ENCODE measurements at regions of chr5 and their contacts with region 1.

Region 1: DNA sequence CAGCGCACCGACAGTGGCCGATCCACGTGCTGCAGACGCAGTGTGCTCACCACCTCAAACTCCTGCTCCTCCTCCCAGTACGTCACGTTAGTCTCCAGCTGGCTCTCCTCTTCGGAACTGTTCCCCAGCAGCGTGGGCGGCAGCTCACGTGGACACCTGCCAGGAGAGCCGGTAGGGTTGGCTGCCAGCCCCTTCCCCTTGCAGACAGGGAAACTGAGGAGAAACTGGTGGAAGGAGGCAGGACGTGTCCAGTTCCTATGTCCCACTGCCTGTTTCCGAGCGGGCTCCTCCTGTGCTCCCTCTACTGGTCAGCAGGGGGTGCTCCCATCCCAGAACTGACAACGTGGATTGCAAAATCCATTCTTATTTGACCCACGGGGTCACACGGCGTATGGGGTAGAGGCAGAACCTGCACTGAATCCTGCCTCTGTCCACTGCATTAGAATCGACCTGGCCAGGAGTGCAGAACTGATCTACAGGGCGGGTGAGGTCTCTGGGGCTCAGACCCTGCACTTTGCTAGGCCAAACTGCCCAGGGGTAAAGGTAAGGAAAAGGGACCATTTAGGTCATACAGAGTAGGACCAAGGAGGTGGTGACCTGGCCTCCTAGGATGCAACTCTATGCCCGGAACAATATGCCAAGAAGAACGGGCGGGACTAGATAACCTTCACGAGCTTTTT is 25.7 kb downstream of the PDGFRB start:
- DNase-seq: peak; percentile 90
- H3K4me3 Mint-ChIP-seq: peak overlapping the region; percentile 59
- H3K27ac Mint-ChIP-seq: no peak overlapping the region
- H3K4me1 Mint-ChIP-seq: peaks cover 25% of the 10 kb centered on the region
- H3K27me3 Mint-ChIP-seq: no peaks in the 10 kb centered on the region
- CTCF ChIP-seq: peak; percentile 98

Region 2: DNA sequence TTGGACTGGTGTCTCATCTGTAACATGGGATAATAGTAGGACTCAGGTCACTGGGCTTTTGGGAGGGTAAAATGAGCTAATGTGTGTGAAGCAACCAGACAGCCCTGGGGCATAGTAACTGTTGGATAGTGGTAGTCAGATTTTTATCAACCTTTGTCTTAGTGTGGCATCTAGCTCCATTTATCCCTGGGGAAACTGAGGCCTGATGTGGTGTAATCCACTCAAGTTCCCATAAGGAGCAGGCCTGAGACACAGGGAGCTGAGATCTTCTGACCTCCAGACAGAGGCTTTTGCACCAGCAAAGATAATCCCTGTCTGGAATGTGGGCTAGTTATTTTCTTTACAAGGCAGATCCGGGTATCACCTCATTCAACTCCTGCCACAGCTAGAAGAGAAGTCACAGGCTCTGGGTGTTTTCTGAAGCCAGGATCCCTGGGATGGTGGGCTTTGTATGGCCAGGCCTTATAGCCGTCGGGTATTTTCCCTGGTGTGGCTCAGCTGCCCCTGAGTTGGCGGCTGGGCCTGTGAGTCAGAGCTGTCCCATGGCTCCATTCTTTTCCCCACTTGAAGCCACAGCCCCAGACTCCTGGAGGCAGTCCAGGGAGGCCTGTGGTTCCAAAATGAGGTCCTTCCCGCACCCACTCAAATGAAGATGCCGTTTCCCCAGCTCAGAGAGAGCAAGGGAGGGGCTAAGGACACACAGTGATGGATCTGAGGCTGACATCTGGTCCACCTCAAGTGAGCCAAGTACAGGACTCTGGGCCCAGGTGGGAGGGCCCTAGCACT is 17.5 kb before region 1 on chr5:
- CTCF ChIA-PET with region 1: interaction called, 32 read pairs
- POLR2A ChIA-PET with region 1: interaction called, 3 read pairs
- intact Hi-C with region 1: no loop called
- DNase-seq: peak; percentile 93
- H3K4me3 Mint-ChIP-seq: no peak overlapping the region
- H3K27ac Mint-ChIP-seq: peak overlapping the region; percentile 46
- H3K4me1 Mint-ChIP-seq: peaks cover 47% of the 10 kb centered on the region
- H3K27me3 Mint-ChIP-seq: no peaks in the 10 kb centered on the region
- CTCF ChIP-seq: no peak

Region 3: GRCh38 chr5:150143350-150144245 is 13.6 kb after region 1 on chr5:
- CTCF ChIA-PET with region 1: interaction called, 29 read pairs
- POLR2A ChIA-PET with region 1: interaction called, 4 read pairs
- intact Hi-C with region 1: no loop called
- DNase-seq: peak; percentile 96
- H3K4me3 Mint-ChIP-seq: peak overlapping the region; percentile 35
- H3K27ac Mint-ChIP-seq: peak overlapping the region; percentile 89
- H3K4me1 Mint-ChIP-seq: peaks cover 42% of the 10 kb centered on the region
- H3K27me3 Mint-ChIP-seq: no peaks in the 10 kb centered on the region
- CTCF ChIP-seq: no peak

Region 4: DNA sequence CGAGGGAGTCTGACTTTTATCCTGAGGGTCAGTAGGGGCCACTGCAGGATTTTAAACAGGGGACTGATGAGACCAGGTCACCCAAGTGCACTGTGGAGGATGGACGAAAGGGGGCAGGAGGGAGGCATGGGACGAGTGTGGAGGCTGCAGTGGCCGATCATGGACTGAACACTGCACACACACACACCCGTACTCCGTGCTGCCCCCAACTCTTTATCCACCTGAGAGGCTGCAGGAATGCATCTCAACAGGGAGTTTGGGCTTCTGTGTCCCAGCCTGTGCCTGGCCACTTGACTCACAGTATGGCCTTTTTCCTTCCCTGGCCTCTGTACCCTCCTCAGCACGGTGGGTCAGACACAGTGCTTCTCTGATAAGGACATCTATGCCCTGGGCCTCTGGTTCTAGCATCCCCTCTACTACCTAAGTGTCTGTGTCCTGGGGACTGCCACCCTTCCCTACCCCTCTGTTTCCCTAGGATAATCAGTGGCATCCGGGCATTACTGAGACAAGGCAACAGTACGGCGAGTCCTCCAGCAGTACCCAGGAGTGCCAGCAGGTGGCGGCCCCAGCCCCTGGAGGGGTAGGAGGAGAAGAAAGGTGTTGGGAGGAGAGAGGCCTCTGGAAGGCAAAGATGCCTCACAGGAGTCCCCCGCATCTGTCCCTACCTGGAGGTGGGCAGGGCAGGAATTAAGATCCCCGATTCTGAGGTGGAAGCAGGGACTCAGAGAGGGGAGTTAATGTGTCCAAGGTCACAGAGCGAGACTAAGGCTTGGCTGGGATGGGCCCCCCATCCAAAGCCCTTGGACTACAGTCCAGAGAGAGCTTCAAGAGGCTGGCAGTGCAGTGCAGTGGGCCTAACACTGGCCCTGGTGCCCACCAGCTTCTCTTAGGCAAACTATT is 31.5 kb after region 1 on chr5:
- CTCF ChIA-PET with region 1: interaction called, 7 read pairs
- POLR2A ChIA-PET with region 1: interaction called, 3 read pairs
- intact Hi-C with region 1: loop called (anchors 1 kb)
- DNase-seq: peak; percentile 88
- H3K4me3 Mint-ChIP-seq: no peak overlapping the region
- H3K27ac Mint-ChIP-seq: no peak overlapping the region
- H3K4me1 Mint-ChIP-seq: peaks cover 12% of the 10 kb centered on the region
- H3K27me3 Mint-ChIP-seq: no peaks in the 10 kb centered on the region
- CTCF ChIP-seq: peak; percentile 98

Region 5: DNA sequence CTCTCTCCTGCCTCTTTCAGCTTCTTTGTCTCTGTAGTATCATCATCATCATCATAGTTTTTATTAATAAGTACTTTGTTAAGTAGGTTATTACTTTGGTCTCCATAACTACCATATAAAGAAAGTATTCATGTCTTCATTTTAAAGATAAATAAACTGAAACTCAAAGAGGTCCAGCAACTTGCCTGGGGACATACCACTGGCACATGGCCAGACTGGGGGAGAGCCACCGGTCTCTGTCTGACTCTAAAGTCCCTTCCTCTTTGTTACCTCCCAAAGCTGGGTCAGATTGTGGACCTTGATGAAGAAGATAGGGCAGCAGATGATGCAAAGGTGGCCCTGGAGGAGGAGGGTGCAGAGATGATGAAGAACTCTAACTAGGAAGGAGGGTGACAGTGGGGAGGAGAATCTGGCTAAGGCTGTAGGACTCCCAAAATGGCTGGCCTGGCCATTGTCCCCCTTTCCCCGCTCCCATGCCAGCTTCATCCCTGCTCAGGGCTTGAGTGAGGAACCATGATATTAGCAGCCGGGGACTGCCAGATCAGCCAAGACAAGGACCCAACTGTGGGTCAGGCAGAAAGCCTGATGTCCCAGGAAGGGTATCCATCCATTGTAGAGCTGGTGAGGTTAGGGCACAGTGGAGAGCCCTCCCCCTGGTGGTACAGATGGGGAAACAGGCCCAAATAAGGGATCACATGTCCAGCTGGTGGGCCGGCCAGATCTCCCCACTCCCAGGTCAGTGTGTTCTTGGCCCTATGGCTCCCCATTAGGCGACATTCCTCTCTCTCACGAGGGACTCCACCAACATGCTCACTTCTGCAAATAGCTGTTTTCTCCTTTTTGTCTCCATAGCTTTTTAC is 45.4 kb after region 1 on chr5:
- CTCF ChIA-PET with region 1: interaction called, 12 read pairs
- POLR2A ChIA-PET with region 1: no interaction called
- intact Hi-C with region 1: loop called (anchors 1 kb)
- DNase-seq: peak; percentile 65
- H3K4me3 Mint-ChIP-seq: no peak overlapping the region
- H3K27ac Mint-ChIP-seq: no peak overlapping the region
- H3K4me1 Mint-ChIP-seq: peaks cover 2% of the 10 kb centered on the region
- H3K27me3 Mint-ChIP-seq: peaks cover 7% of the 10 kb centered on the region
- CTCF ChIP-seq: peak; percentile 45

Region 6: GRCh38 chr5:150217873-150218692 is 88.1 kb after region 1 on chr5:
- CTCF ChIA-PET with region 1: interaction called, 45 read pairs
- POLR2A ChIA-PET with region 1: no interaction called
- intact Hi-C with region 1: loop called (anchors 1 kb)
- DNase-seq: peak; percentile 93
- H3K4me3 Mint-ChIP-seq: no peak overlapping the region
- H3K27ac Mint-ChIP-seq: no peak overlapping the region
- H3K4me1 Mint-ChIP-seq: no peaks in the 10 kb centered on the region
- H3K27me3 Mint-ChIP-seq: no peaks in the 10 kb centered on the region
- CTCF ChIP-seq: peak; percentile 98

Region 7: GRCh38 chr5:150436141-150436680 is 306.3 kb after region 1 on chr5:
- CTCF ChIA-PET with region 1: interaction called, 9 read pairs
- POLR2A ChIA-PET with region 1: no interaction called
- intact Hi-C with region 1: loop called (anchors 1 kb)
- DNase-seq: peak; percentile 89
- H3K4me3 Mint-ChIP-seq: no peak overlapping the region
- H3K27ac Mint-ChIP-seq: no peak overlapping the region
- H3K4me1 Mint-ChIP-seq: peaks cover 14% of the 10 kb centered on the region
- H3K27me3 Mint-ChIP-seq: no peaks in the 10 kb centered on the region
- CTCF ChIP-seq: peak; percentile 94